ENCODE measurements at regions of chr22 and their contacts with region 1.

Region 1: GRCh38 chr22:19891317-19892256 is 36.9 kb upstream of the GNB1L start:
- DNase-seq: peak; percentile 67 to 92 (median 82)
- ATAC-seq: peak; percentile 77
- H3K4me3 ChIP-seq: peak overlapping the region; percentile 56
- H3K4me3 Mint-ChIP-seq: peak overlapping the region; percentile 78
- H3K27ac ChIP-seq: peak overlapping the region; percentile 76 to 99
- H3K27ac Mint-ChIP-seq: peak overlapping the region; percentile 97
- H3K4me1 ChIP-seq: peaks cover 100% of the 10 kb centered on the region
- H3K4me1 Mint-ChIP-seq: peaks cover 86% of the 10 kb centered on the region
- H3K27me3 ChIP-seq: no peaks in the 10 kb centered on the region
- H3K27me3 Mint-ChIP-seq: no peaks in the 10 kb centered on the region
- CTCF ChIP-seq: no peak

Region 2: GRCh38 chr22:19756288-19757128 is 135.1 kb before region 1 on chr22:
- CTCF ChIA-PET with region 1: interaction called, 7 read pairs
- POLR2A ChIA-PET with region 1: interaction called, 17 read pairs
- intact Hi-C with region 1: loop called (anchors 5 kb)
- DNase-seq: peak; percentile 59 to 87 (median 73)
- ATAC-seq: peak; percentile 85
- H3K4me3 ChIP-seq: peak overlapping the region; percentile 40
- H3K4me3 Mint-ChIP-seq: peak overlapping the region; percentile 87
- H3K27ac ChIP-seq: no peak overlapping the region
- H3K27ac Mint-ChIP-seq: no peak overlapping the region
- H3K4me1 ChIP-seq: peaks cover 32% of the 10 kb centered on the region
- H3K4me1 Mint-ChIP-seq: peaks cover 33% of the 10 kb centered on the region
- H3K27me3 ChIP-seq: peaks cover 45 to 59% of the 10 kb centered on the region in 2 experiments
- H3K27me3 Mint-ChIP-seq: peaks cover 68% of the 10 kb centered on the region
- CTCF ChIP-seq: peak; percentile 62

Region 3: DNA sequence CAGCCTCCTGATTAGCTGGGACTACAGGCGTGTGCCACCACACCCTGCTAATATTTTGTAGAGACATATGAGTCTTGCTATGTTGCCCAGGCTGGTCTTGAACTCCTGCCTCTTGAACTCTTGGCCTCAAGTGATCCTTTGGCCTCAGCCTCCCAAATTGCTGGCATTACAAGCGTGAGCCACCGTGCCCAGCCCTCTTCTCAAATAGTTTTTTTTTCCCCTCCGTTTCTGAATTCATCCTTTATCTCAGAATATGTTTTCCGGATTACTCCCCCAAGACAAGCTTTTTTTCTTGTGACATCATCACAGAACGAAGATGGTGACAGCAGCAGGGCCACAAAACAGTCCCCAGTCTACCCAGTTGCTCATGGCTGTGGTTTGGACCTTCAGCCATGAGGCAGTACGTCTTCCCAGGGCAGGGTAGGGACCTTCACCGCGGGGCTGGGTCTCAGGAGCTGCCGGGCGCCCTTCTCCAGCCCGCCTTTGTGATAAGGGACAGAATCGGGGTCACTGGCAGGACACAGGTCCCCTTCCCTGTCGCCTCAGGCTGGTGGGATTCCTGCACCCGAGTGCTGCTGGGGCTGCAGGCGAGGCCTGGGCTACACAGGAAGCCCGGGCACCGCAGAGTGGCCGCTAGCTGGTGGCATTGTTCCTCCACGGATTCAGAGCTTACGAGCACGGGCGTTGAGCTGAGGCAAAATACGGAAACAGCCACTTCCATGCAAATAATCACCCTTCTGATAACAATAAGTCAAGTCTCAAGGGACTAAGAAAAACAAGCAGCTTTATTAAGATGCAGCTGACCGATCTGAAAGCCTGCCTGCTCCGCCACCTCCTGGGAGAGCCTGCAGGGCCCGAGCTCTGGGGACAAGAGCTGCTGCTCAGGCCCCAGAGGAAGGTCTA is 118.9 kb before region 1 on chr22:
- CTCF ChIA-PET with region 1: no interaction called
- POLR2A ChIA-PET with region 1: no interaction called
- intact Hi-C with region 1: no loop called
- DNase-seq: no peak
- ATAC-seq: no peak
- H3K4me3 ChIP-seq: no peak overlapping the region
- H3K4me3 Mint-ChIP-seq: no peak overlapping the region
- H3K27ac ChIP-seq: no peak overlapping the region
- H3K27ac Mint-ChIP-seq: no peak overlapping the region
- H3K4me1 ChIP-seq: peaks cover 10% of the 10 kb centered on the region
- H3K4me1 Mint-ChIP-seq: peaks cover 10% of the 10 kb centered on the region
- H3K27me3 ChIP-seq: peaks cover 54 to 60% of the 10 kb centered on the region in 2 experiments
- H3K27me3 Mint-ChIP-seq: peaks cover 71% of the 10 kb centered on the region
- CTCF ChIP-seq: no peak

Region 4: DNA sequence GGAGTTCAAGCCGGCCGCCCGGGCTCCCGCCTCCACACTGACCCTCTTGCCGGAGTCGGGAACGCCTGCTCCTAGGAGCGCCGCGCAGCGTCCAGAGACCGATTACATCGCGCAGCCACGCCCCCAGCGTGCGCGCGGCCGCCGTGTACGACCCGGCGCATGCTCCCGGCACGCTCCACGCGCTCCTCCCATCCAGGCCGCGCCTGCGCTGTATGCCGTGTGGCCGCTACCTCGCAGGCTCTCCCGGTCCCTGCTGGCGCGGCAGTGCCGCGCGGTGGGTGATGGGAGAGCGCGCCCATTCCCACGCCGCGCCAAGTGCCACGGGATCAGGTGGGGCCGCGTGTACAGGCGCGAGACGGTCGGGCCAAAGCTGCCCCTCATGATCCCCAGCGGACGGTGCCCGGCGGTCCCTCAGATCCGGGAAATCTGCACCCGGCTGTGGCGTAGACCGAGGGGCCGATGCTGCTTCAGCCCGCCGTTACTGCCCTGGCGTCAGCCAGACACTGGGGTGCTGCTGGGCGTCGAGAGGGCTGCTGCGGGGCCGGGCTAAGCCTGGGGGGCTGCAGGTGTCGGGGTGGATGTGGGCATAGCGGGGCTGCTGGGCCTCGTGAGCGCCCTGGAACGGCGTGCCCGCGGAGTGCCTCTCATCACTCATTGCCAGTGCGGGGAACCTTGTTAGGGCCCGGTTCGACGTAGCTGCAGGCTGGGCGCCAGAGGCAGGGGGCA is 36.6 kb before region 1 on chr22 and contains the starts of genes GNB1L and RTL10:
- CTCF ChIA-PET with region 1: interaction called, 10 read pairs
- POLR2A ChIA-PET with region 1: interaction called, 92 read pairs
- intact Hi-C with region 1: loop called (anchors 1 kb)
- DNase-seq: peak; percentile 92 to 99 (median 96)
- ATAC-seq: peak; percentile 89
- H3K4me3 ChIP-seq: peak within 1 kb of the TSS; percentile 99
- H3K4me3 Mint-ChIP-seq: peak within 1 kb of the TSS; percentile 95
- H3K27ac ChIP-seq: peak within 1 kb of the TSS; percentile 78 to 90
- H3K27ac Mint-ChIP-seq: peak within 1 kb of the TSS; percentile 96
- H3K4me1 ChIP-seq: peaks cover 58% of the 10 kb centered on the region
- H3K4me1 Mint-ChIP-seq: peaks cover 71% of the 10 kb centered on the region
- H3K27me3 ChIP-seq: no peaks in the 10 kb centered on the region
- H3K27me3 Mint-ChIP-seq: no peaks in the 10 kb centered on the region
- CTCF ChIP-seq: no peak
- total RNA-seq, gene GNB1L: 3.0 to 6.5 TPM
- total RNA-seq, gene RTL10: 24.7 TPM

Region 5: GRCh38 chr22:19902245-19902715 is 10.7 kb after region 1 on chr22:
- CTCF ChIA-PET with region 1: no interaction called
- POLR2A ChIA-PET with region 1: interaction called, 10 read pairs
- intact Hi-C with region 1: no loop called
- DNase-seq: no peak
- ATAC-seq: no peak
- H3K4me3 ChIP-seq: no peak overlapping the region
- H3K4me3 Mint-ChIP-seq: no peak overlapping the region
- H3K27ac ChIP-seq: no peak overlapping the region
- H3K27ac Mint-ChIP-seq: no peak overlapping the region
- H3K4me1 ChIP-seq: peaks cover 4% of the 10 kb centered on the region
- H3K4me1 Mint-ChIP-seq: peaks cover 2% of the 10 kb centered on the region
- H3K27me3 ChIP-seq: no peaks in the 10 kb centered on the region
- H3K27me3 Mint-ChIP-seq: no peaks in the 10 kb centered on the region
- CTCF ChIP-seq: no peak

Region 6: GRCh38 chr22:20141186-20142077 is 249.8 kb after region 1 on chr22:
- CTCF ChIA-PET with region 1: no interaction called
- POLR2A ChIA-PET with region 1: no interaction called
- intact Hi-C with region 1: no loop called
- DNase-seq: no peak
- ATAC-seq: no peak
- H3K4me3 ChIP-seq: no peak overlapping the region
- H3K4me3 Mint-ChIP-seq: no peak overlapping the region
- H3K27ac ChIP-seq: no peak overlapping the region
- H3K27ac Mint-ChIP-seq: no peak overlapping the region
- H3K4me1 ChIP-seq: peaks cover 14% of the 10 kb centered on the region
- H3K4me1 Mint-ChIP-seq: peaks cover 10% of the 10 kb centered on the region
- H3K27me3 ChIP-seq: no peaks in the 10 kb centered on the region
- H3K27me3 Mint-ChIP-seq: no peaks in the 10 kb centered on the region
- CTCF ChIP-seq: no peak